AG04449 (cell line): ENCODE measurements at regions of chr17 and their contacts with region 1.

Region 1: DNA sequence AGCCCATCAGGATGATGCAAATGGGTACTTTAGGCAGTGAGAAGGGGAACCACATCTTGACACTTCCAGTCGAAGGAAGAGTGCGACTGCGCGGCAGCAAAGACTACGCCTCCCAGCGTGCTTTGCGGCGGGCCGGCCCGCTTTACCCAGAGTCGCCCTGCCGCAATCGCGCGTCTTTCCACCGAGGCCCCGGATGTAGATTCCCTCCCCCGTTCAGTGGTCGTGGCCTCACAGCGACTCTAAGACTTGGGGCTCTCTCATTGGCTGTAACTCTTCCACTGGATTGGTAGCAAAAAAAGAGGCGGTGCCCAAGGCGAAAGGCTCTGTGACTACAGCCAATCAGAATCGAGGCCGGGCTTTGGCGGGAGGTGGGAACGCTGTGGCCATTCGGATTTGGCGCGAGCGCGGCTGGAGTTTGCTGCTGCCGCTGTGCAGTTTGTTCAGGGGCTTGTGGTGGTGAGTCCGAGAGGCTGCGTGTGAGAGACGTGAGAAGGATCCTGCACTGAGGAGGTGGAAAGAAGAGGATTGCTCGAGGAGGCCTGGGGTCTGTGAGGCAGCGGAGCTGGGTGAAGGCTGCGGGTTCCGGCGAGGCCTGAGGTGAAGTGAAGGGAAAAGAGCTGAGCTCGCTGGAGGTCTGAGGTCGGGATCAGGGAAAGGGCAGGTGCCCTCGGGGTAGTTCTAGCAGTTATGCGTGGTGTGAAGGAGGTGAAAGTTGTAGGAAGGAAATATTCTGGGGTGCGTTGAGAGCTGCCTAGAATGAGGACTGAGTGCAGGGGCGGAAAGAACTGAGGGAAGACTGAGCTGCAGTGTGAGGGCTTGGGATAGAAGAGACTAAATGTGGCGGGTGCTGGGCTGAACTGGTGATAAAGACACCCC is at the start of gene CDC6:
- DNase-seq: peak; percentile 91
- H3K4me3 ChIP-seq: peak within 1 kb of the TSS; percentile 75
- CTCF ChIP-seq: no peak

Region 2: GRCh38 chr17:40015005-40015997 is 272.4 kb before region 1 on chr17 and contains the start of gene CSF3:
- CTCF ChIA-PET with region 1: interaction called, 38 read pairs
- POLR2A ChIA-PET with region 1: no interaction called
- DNase-seq: no peak
- H3K4me3 ChIP-seq: no peak within 1 kb of the TSS
- CTCF ChIP-seq: no peak

Region 3: DNA sequence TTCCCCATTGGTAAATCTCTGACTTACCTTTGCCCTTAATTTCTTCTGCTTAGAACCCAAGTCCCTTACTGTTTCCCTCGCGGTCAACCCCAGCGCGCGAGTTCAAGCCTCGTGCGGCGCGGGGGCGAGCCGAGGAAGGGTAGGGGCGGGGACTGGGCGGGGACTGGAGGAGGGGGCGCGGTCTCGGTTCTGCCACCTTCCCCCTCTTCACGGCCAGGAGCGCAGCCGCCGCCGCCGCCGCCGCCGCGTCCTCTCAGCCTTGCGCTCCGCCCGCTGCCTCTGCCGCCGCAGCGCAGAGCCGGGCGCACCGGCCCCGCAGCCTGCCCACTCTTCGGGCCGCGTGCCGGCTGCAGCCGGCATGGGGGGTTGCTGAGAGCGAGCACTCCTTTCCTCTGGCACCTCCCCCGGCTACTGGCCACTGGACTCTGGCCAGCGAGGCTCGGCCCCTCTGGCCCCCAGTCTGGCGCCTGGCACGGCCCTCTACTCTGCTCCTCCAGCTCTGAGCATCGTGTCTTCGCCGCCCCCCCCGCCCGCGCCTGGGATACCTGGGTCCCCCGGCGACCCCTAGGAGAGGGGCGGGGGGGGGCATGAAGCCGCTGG is 110.4 kb before region 1 on chr17 and contains the start of gene RAPGEFL1:
- CTCF ChIA-PET with region 1: interaction called, 13 read pairs
- POLR2A ChIA-PET with region 1: no interaction called
- DNase-seq: no peak
- H3K4me3 ChIP-seq: peak within 1 kb of the TSS; percentile 55
- CTCF ChIP-seq: no peak

Region 4: GRCh38 chr17:40203131-40203530 is 84.6 kb before region 1 on chr17:
- CTCF ChIA-PET with region 1: interaction called, 290 read pairs
- POLR2A ChIA-PET with region 1: no interaction called
- DNase-seq: no peak
- H3K4me3 ChIP-seq: no peak overlapping the region
- CTCF ChIP-seq: no peak

Region 5: GRCh38 chr17:40219073-40219860 is 68.5 kb before region 1 on chr17 and contains the start of gene WIPF2:
- CTCF ChIA-PET with region 1: interaction called, 56 read pairs
- POLR2A ChIA-PET with region 1: no interaction called
- DNase-seq: peak; percentile 61
- H3K4me3 ChIP-seq: peak within 1 kb of the TSS; percentile 94
- CTCF ChIP-seq: peak; percentile 80

Region 6: GRCh38 chr17:40309031-40309948 is 21.6 kb after region 1 on chr17 and contains the start of gene RARA:
- CTCF ChIA-PET with region 1: interaction called, 75 read pairs
- POLR2A ChIA-PET with region 1: no interaction called
- DNase-seq: no peak
- H3K4me3 ChIP-seq: peak within 1 kb of the TSS; percentile 61
- CTCF ChIP-seq: no peak

Region 7: DNA sequence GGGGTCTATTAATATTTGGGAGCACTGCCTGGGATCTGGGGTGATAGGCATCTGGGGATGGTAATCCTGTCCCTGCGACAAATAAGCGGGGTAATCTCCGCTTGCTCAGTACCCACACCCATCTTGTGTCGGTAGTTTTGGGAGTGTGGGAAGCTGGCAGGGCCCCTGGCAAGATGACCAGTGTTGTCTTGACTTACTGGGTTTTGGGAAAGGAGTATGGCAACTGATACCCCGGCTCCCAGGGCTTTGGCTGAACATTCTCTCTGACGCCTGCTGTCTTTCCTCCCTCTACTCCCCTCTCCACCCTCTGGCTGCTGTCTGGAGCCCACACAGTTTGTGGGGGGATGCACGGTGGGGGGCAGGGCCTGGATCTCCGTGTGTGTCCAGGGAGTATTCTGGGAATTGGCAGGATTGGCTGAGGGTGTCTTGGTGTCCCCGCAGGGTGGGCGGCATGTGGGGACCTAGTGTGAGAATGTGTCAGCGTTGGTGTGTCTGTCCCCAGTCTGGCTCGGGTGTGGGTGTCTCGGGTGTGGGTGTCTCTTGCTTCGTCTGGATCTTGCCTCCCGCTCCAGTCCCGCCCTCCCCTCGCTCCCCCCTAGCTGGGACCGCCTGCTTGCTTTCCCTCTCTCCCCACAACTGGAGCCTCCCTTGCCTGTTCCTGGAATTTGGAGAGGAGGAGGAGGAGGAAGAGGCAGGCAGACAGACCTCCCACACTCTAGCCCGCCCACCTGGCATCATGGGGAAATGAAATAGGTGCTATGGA is 33.2 kb after region 1 on chr17:
- CTCF ChIA-PET with region 1: no interaction called
- POLR2A ChIA-PET with region 1: no interaction called
- DNase-seq: no peak
- H3K4me3 ChIP-seq: peak overlapping the region; percentile 92
- CTCF ChIP-seq: no peak